Motor neuron (in vitro differentiated cells): ENCODE measurements at regions of chr3 and their contacts with region 1.

Region 1: DNA sequence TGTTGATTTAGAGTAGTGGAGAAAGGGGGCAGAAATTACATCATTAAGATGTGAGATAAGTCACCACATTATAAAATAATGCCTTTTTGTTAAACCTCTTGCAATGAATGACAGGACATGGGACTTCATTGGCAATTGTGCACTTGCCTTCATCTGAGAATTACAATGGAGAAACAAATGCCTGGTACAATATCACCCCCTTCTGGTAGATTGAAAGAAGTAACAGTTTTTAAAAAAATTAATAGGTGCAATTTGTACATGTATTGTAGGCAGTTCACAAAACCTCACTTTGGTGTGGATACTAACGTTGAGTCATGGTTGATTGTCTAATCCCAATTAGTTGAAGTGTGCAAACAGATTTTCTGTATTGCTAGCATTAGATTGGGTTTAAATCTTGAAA is 4.6 kb upstream of the P2RY14 start:
- ATAC-seq: peak in 5 of 8 experiments; percentile 10 to 65 (median 23)
- H3K4me3 ChIP-seq: no peak overlapping the region
- H3K27ac ChIP-seq: no peak overlapping the region
- H3K4me1 ChIP-seq: no peaks in the 10 kb centered on the region

Region 2: DNA sequence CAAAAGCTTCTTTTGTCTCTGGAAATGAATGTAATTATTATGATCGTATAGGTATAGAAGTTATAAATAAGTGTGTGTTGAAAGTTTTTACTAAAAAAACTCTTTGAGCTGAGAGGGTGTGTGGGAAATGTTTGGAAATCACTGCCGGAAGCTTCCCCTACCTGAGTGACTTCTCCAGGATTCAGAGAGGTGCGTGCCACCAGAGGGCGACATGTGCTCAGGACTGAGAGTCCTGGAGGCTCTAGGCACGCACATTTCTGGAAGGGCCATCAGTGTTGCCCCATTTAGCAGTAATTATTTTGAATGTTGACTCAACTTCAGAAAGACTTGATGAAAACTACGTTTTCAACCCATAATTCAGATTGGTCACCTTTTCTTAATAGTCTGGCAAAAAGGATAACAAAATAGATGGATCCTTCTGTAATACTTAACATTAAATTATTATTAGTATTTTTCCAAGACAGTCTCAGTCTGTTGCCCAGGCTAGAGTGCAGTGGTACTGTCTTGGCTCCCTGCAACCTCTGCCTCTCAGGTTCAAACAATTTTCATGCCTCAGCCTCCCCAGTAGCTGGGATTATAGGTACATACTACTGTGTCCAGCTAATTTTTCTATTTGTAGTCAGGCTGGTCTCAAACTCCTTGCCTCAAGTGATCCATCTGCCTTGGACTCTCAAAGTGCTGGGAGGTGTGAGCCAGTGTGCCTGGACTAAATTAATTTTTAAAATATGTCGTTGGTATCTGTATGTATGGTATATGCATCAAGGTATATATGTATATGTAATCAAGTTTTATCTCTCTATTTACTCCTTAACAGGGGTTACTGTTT is 114.4 kb before region 1 on chr3:
- in situ Hi-C with region 1: loop called in 6 of 9 experiments (anchors 5 to 25 kb)
- ATAC-seq: peak in 6 of 8 experiments; percentile 60 to 92 (median 86)
- H3K4me3 ChIP-seq: no peak overlapping the region
- H3K27ac ChIP-seq: no peak overlapping the region
- H3K4me1 ChIP-seq: peaks cover 5 to 12% of the 10 kb centered on the region in 2 donors

Region 3: GRCh38 chr3:151439652-151440129 is 156.8 kb after region 1 on chr3:
- in situ Hi-C with region 1: no loop called
- ATAC-seq: peak; percentile 54 to 88 (median 64)
- H3K4me3 ChIP-seq: no peak overlapping the region
- H3K27ac ChIP-seq: no peak overlapping the region
- H3K4me1 ChIP-seq: no peaks in the 10 kb centered on the region

Region 4: DNA sequence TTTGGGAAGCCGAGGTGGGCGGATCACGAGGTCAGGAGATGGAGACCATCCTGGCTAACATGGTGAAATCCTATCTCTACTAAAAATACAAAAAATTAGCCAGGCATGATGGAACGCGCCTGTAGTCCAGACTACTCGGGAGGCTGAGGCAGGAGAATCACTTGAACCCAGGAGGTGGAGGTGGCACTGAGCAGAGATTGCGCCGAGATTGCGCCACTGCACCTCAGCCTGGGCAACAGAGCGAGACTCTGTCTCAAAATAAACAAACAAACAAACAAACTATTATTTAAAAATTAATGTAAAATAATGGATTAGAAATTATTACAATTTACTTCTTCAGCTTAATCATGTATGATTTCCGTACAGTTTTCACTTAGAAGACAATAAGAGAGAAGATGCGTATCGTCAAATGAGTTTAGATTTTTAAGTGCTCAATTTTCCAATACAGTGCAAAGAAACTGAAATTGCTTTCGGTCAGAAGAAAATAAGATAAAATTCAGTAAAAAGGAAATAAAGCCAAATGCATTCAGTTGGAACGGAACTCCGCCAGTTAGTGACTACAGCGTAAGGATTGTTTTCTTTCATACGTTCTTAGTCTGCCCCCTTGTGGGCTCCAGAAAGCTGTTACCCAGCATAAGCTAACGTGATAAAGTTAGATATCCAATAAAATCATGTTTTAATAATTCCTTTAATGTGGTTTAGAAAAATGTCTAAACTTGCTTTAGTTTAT is 555.8 kb after region 1 on chr3:
- in situ Hi-C with region 1: loop called in 2 of 9 experiments (anchors 25 kb)
- ATAC-seq: peak; percentile 54 to 95 (median 80)
- H3K4me3 ChIP-seq: no peak overlapping the region
- H3K27ac ChIP-seq: no peak overlapping the region
- H3K4me1 ChIP-seq: peaks cover 0 to 5% of the 10 kb centered on the region in 2 donors